Aorta (tissue), 5 donors: ENCODE measurements at regions of chr20 and their contacts with region 1.

Region 1: DNA sequence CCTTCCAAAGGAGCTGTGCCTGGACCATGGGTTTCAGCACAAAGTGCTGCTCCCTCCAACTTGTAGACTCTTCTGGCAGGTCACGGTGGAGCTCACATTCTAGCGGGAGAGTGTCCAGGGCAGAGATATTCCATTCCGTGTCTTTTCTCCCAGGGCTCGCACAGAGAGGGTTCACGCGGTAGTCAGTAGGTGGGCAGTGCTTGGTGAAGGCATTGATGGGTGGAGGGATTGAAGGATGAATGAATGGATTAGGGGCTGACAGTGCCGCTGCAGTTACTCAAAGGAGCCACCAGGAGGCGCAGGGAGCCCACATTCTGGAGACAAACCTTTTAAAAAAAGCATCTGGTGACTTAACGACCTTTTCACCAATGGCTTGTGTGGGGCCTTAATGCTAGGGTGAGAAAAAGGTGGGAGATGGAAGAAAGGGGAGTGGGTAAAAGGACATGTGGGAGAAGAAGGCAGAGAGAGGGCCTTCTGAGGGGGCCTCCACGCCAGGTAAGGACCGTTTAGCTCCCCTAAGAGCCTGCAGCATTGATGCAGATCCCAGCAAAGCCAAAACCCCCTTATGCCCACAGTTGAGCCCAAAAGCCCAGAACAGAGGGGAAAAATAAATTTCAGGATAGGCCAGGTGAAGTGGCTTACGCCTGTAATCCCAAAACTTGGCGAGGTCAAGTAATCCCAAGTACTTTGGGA is 17.5 kb upstream of the FAM110A start:
- DNase-seq: peak; percentile 60 to 83
- ATAC-seq: peak; percentile 64
- H3K4me3 ChIP-seq: no peak overlapping the region
- H3K27ac ChIP-seq: no peak overlapping the region
- H3K4me1 ChIP-seq: no peaks in the 10 kb centered on the region
- H3K27me3 ChIP-seq: no peaks in the 10 kb centered on the region

Region 2: GRCh38 chr20:956330-956951 is 140.4 kb after region 1 on chr20:
- intact Hi-C with region 1: loop called (anchors 1 to 5 kb)
- DNase-seq: peak; percentile 65 to 84
- ATAC-seq: peak; percentile 76
- H3K4me3 ChIP-seq: no peak overlapping the region
- H3K27ac ChIP-seq: no peak overlapping the region
- H3K4me1 ChIP-seq: no peaks in the 10 kb centered on the region
- H3K27me3 ChIP-seq: no peaks in the 10 kb centered on the region

Region 3: GRCh38 chr20:1108437-1108920 is 292.4 kb after region 1 on chr20:
- intact Hi-C with region 1: loop called (anchors 5 to 10 kb)
- DNase-seq: peak; percentile 63 to 81
- ATAC-seq: no peak
- H3K4me3 ChIP-seq: no peak overlapping the region
- H3K27ac ChIP-seq: no peak overlapping the region
- H3K4me1 ChIP-seq: no peaks in the 10 kb centered on the region
- H3K27me3 ChIP-seq: no peaks in the 10 kb centered on the region

Region 4: GRCh38 chr20:1212607-1213396 is 396.7 kb after region 1 on chr20:
- intact Hi-C with region 1: loop called (anchors 5 kb)
- DNase-seq: peak; percentile 68 to 85
- ATAC-seq: peak; percentile 81
- H3K4me3 ChIP-seq: no peak overlapping the region
- H3K27ac ChIP-seq: no peak overlapping the region
- H3K4me1 ChIP-seq: no peaks in the 10 kb centered on the region
- H3K27me3 ChIP-seq: no peaks in the 10 kb centered on the region